PC-3 (cell line): ENCODE measurements at regions of chr10 and their contacts with region 1.

Region 1: GRCh38 chr10:98168147-98168546 is 33.7 kb downstream of the R3HCC1L start:
- DNase-seq: no peak
- ATAC-seq: no peak
- H3K4me3 ChIP-seq: no peak overlapping the region
- H3K27ac ChIP-seq: no peak overlapping the region
- H3K4me1 ChIP-seq: no peaks in the 10 kb centered on the region
- H3K27me3 ChIP-seq: no peaks in the 10 kb centered on the region
- CTCF ChIP-seq: no peak

Region 2: DNA sequence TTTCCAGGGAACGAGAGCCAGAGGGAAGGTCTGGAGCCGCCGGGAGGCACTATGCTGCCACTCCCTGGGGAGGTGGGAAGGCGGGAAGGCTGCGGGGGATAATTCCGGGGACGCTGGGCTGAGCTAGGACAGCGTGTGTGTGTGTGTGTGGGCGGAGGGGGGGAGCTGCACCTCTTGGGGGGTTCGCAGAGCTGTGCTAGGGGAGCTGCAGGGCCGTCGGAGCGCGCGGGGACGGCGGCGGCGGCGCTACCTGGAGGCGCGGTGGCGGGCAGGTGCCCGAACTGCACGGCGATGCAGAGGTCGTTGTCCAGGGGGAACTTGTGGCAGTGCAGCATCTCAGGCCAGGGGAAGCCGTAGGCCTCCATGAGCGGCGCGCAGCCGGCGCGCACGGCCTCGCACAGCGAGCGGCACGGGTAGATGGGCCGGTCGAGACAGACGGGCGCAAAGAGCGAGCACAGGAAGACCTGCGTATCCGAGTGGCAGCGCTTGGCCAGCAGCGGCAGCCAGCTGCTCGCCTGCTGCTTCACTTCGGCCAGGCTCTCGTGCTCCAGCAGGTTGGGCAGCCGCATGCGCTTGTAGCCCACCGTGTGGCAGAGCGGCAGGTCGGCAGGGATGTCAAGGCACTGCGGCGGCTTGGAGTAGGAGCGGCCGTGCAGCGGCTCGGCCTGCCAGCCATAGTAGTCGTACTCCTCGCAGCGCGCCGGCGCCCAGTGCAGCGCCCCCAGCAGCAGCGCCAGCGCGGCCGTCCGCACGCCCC is 396.9 kb before region 1 on chr10:
- CTCF ChIA-PET with region 1: no interaction called
- POLR2A ChIA-PET with region 1: no interaction called
- intact Hi-C with region 1: no loop called
- DNase-seq: no peak
- ATAC-seq: peak; percentile 40
- H3K4me3 ChIP-seq: no peak overlapping the region
- H3K27ac ChIP-seq: no peak overlapping the region
- H3K4me1 ChIP-seq: no peaks in the 10 kb centered on the region
- H3K27me3 ChIP-seq: peaks cover 7% of the 10 kb centered on the region; the same call in 1 of the 2 replicates
- CTCF ChIP-seq: no peak

Region 3: GRCh38 chr10:98318861-98319260 is 150.7 kb after region 1 on chr10:
- CTCF ChIA-PET with region 1: interaction called, 11 read pairs
- POLR2A ChIA-PET with region 1: interaction called, 3 read pairs
- intact Hi-C with region 1: no loop called
- DNase-seq: no peak
- ATAC-seq: no peak
- H3K4me3 ChIP-seq: no peak overlapping the region
- H3K27ac ChIP-seq: no peak overlapping the region
- H3K4me1 ChIP-seq: peaks cover 55% of the 10 kb centered on the region
- H3K27me3 ChIP-seq: no peaks in the 10 kb centered on the region
- CTCF ChIP-seq: no peak